IMR-90 (cell line): ENCODE measurements at regions of chr1 and their contacts with region 1.

Region 1: DNA sequence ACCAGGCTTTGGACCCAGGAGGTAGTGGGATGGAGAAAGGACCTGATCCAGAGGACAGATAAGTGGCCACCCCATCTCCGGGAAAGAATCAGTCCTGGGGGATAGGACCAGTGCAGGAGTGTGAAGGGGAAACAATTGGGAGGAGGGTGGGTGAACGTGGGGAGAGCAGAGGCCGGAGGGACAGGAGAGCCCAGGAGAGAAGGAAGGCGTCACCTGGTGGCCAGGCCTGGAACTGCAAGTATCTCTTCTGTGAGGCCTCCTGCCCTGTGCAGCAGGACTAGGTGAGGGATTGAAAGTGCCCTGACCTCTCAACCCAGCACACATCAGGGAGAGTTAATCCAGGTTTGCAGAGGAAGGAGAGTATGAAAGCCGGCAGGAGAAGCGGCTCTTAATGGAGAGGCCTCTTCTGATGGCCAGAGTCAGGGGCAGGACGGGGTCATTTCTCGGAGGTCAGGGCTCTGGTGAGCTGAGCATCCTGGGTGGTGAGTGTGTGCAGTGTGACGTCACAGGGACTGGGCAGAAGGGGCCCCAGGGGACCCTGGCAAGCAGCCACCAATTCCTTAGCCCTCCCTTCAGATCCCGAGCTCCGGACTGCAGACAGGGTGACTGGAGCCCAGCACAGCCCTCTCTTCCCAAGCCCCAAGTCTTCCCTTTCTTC is 9.2 kb upstream of the LAD1 start:
- DNase-seq: peak; percentile 68
- ATAC-seq: peak; percentile 99
- H3K4me3 ChIP-seq: no peak overlapping the region
- H3K27ac ChIP-seq: no peak overlapping the region
- H3K4me1 ChIP-seq: no peaks in the 10 kb centered on the region
- H3K27me3 ChIP-seq: peaks cover 58% of the 10 kb centered on the region
- CTCF ChIP-seq: peak; percentile 87
- POLR2A ChIP-seq: no peak
- RAD21 ChIP-seq: peak; percentile 85

Region 2: DNA sequence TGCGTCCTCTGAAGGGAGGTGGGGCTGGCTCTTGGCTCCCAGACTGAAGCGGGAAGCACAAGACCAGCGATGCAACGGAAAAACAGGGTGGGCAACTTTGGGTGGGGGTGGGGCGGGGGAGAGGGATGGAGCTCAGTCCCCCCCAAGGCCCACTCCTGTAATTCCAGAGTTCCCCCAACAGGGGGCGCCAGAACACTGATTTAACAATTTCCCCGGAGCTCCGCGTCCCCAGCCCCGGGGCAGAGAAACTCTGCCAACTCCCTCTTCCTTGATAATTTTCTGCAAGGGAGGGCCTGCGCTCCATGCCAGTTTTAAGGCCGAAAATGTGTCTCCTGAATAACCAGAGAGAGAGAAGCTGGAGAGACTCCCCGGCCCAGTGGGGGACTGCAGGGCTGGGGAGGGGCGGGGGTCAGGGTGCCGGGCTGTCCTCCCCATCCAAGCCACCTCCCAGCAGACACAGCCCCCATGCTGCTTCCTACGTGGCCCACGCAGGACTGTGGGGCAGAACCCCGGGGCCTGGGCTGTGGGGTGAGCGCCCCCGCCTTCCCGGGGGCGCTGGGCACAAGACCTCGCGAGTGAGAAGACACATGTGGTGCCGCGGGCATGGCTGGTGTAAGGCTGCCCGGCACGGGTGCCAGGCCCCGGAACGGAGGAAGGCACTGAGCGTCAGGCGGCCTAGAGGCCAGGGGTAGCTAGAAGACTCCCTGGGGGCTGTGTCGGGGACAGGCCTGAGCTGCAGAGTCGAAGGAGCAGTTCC is 436.2 kb before region 1 on chr1:
- CTCF ChIA-PET with region 1: no interaction called
- POLR2A ChIA-PET with region 1: no interaction called
- dilution Hi-C with region 1: no loop called
- in situ Hi-C with region 1: no loop called
- intact Hi-C with region 1: loop called (anchors 5 kb)
- DNase-seq: peak; percentile 38
- ATAC-seq: peak; percentile 77
- H3K4me3 ChIP-seq: no peak overlapping the region
- H3K27ac ChIP-seq: no peak overlapping the region
- H3K4me1 ChIP-seq: no peaks in the 10 kb centered on the region
- H3K27me3 ChIP-seq: peaks cover 5% of the 10 kb centered on the region; the same call in 1 of the 2 replicates
- CTCF ChIP-seq: peak; percentile 71
- POLR2A ChIP-seq: no peak
- RAD21 ChIP-seq: peak; percentile 71

Region 3: DNA sequence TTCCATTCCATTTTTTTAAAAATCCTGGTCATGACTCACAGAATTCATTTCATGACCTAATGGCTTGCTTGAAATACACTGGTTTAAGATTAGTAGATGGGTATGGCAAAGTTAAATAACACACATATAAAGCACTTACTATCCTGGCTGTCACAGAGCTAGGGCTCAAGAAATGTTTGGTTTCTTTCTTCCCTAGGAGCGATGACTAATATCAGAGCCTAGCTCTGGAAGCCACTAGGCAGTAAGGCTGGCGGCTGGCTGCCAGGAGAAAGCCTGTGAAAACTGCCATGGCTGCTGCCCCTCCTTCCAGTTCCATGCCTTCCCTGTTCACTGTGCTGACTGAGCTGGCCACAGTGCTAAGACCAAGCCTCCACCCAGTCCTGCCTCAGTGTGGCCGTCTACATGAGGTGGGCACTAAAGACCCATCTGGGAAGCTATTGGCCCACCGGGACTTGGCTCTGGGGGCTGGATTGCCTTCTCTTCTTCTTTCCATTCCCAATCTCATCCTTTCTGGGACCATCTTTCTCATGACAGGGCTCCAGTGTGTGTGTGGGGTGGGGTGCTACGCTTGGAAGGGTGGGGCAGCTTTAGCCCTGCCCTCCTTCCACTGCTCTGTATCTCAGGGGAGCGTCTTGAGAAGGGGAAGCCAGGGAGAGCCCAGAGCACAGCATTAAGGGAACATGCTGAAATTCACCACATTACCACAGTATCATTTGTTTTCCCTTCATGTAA is 270.6 kb before region 1 on chr1:
- CTCF ChIA-PET with region 1: no interaction called
- POLR2A ChIA-PET with region 1: no interaction called
- dilution Hi-C with region 1: no loop called
- in situ Hi-C with region 1: no loop called
- intact Hi-C with region 1: no loop called
- DNase-seq: peak; percentile 97
- ATAC-seq: peak; percentile 94
- H3K4me3 ChIP-seq: no peak overlapping the region
- H3K27ac ChIP-seq: peak overlapping the region; percentile 38
- H3K4me1 ChIP-seq: peaks cover 13% of the 10 kb centered on the region
- H3K27me3 ChIP-seq: no peaks in the 10 kb centered on the region
- CTCF ChIP-seq: no peak
- POLR2A ChIP-seq: no peak
- RAD21 ChIP-seq: peak; percentile 8; the same call in 1 of the 2 replicates

Region 4: GRCh38 chr1:201254625-201255506 is 153.4 kb before region 1 on chr1:
- CTCF ChIA-PET with region 1: interaction called, 4 read pairs
- POLR2A ChIA-PET with region 1: no interaction called
- dilution Hi-C with region 1: no loop called
- in situ Hi-C with region 1: no loop called
- intact Hi-C with region 1: loop called (anchors 1 kb)
- DNase-seq: no peak
- ATAC-seq: peak; percentile 89
- H3K4me3 ChIP-seq: no peak overlapping the region
- H3K27ac ChIP-seq: no peak overlapping the region
- H3K4me1 ChIP-seq: peaks cover 4% of the 10 kb centered on the region
- H3K27me3 ChIP-seq: peaks cover 27% of the 10 kb centered on the region
- CTCF ChIP-seq: peak; percentile 94
- POLR2A ChIP-seq: peak; percentile 66
- RAD21 ChIP-seq: peak; percentile 99

Region 5: GRCh38 chr1:201348211-201348566 is 60.1 kb before region 1 on chr1:
- CTCF ChIA-PET with region 1: interaction called, 8 read pairs
- POLR2A ChIA-PET with region 1: no interaction called
- dilution Hi-C with region 1: no loop called
- in situ Hi-C with region 1: no loop called
- intact Hi-C with region 1: loop called (anchors 1 kb)
- DNase-seq: peak; percentile 63
- ATAC-seq: peak; percentile 91
- H3K4me3 ChIP-seq: no peak overlapping the region
- H3K27ac ChIP-seq: no peak overlapping the region
- H3K4me1 ChIP-seq: no peaks in the 10 kb centered on the region
- H3K27me3 ChIP-seq: peaks cover 53% of the 10 kb centered on the region
- CTCF ChIP-seq: peak; percentile 82
- POLR2A ChIP-seq: no peak
- RAD21 ChIP-seq: peak; percentile 82

Region 6: DNA sequence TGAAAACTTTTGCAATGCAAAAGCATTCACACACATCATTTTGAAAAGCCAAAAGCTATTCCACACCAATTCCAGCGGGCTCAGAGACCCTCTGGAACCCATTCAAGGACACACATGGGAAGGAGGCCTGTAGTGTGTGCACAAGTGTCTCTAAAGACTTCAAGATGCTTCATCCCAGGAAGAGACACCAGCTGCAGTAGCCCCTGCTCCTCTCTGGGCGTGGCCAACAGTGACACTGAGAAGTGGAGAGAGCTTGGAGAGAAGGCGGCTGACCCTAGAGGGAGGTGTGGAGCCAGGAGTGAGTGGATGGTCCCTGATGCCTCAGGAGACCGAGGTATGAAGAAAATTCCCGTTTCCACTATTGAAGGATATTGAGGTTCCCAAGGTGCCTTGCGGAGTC is 28.1 kb after region 1 on chr1:
- CTCF ChIA-PET with region 1: interaction called, 10 read pairs
- POLR2A ChIA-PET with region 1: no interaction called
- dilution Hi-C with region 1: no loop called
- in situ Hi-C with region 1: no loop called
- intact Hi-C with region 1: no loop called
- DNase-seq: peak; percentile 26
- ATAC-seq: peak; percentile 55
- H3K4me3 ChIP-seq: no peak overlapping the region
- H3K27ac ChIP-seq: no peak overlapping the region
- H3K4me1 ChIP-seq: no peaks in the 10 kb centered on the region
- H3K27me3 ChIP-seq: peaks cover 4% of the 10 kb centered on the region; the same call in 1 of the 2 replicates
- CTCF ChIP-seq: peak; percentile 22; the same call in 1 of the 2 replicates
- POLR2A ChIP-seq: no peak
- RAD21 ChIP-seq: peak; percentile 38